ENCODE measurements at regions of chr17 and their contacts with region 1.

Region 1: DNA sequence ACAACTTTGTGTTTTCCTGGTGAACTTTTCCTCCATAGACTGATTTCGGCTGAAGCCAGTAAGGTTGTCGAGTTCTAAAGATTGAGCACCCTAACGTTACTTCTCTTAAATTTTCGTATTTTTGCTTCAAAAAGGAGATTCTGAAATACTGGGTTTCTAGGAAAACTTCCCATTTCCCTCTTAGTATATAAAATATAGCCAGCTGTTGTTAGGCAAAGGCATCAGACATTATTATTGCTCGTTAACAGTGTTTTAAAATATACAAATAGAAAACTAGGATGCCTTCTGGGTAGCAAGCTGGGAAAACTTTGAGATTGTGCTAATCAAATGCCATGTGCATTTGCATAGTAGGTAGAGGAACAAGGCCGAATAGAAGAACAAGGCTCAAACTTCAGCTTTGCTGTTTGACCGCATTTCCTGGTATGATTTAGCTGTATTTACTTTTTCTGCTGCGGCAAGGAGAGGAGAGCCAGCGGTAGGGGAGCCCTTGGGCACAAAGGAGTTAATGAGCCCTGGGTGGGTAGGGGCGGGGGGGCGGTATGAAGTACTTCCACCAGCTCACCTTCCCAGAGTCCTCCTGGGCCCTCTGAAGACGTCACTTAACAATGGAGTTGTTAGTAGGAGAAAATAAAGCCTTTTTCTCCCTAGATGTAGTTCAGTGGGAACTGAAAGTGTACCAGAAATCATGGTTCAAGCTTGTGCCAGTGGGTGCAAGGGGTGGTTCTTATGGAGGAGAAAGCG is 151.9 kb downstream of the MSI2 start:
- DNase-seq: peak; percentile 35
- ATAC-seq: peak; percentile 54
- H3K4me3 ChIP-seq: peak overlapping the region in 3 of 5 experiments; percentile 4 to 21 (median 15)
- H3K4me3 Mint-ChIP-seq: peak overlapping the region; percentile 40
- H3K27ac ChIP-seq: peak overlapping the region; percentile 29 to 40
- H3K27ac Mint-ChIP-seq: peak overlapping the region; percentile 23
- H3K4me1 ChIP-seq: peaks cover 16 to 22% of the 10 kb centered on the region in 2 donors
- H3K4me1 Mint-ChIP-seq: peaks cover 32% of the 10 kb centered on the region
- H3K27me3 ChIP-seq: no peaks in the 10 kb centered on the region
- H3K27me3 Mint-ChIP-seq: no peaks in the 10 kb centered on the region
- CTCF ChIP-seq: no peak

Region 2: GRCh38 chr17:57166717-57167198 is 241.5 kb before region 1 on chr17:
- CTCF ChIA-PET with region 1: no interaction called
- POLR2A ChIA-PET with region 1: no interaction called
- intact Hi-C with region 1: no loop called
- DNase-seq: no peak
- ATAC-seq: no peak
- H3K4me3 ChIP-seq: no peak overlapping the region
- H3K4me3 Mint-ChIP-seq: no peak overlapping the region
- H3K27ac ChIP-seq: no peak overlapping the region
- H3K27ac Mint-ChIP-seq: no peak overlapping the region
- H3K4me1 ChIP-seq: no peaks in the 10 kb centered on the region
- H3K4me1 Mint-ChIP-seq: no peaks in the 10 kb centered on the region
- H3K27me3 ChIP-seq: peaks cover 0 to 6% (median 0%) of the 10 kb centered on the region in 4 experiments
- H3K27me3 Mint-ChIP-seq: peaks cover 40% of the 10 kb centered on the region
- CTCF ChIP-seq: no peak

Region 3: DNA sequence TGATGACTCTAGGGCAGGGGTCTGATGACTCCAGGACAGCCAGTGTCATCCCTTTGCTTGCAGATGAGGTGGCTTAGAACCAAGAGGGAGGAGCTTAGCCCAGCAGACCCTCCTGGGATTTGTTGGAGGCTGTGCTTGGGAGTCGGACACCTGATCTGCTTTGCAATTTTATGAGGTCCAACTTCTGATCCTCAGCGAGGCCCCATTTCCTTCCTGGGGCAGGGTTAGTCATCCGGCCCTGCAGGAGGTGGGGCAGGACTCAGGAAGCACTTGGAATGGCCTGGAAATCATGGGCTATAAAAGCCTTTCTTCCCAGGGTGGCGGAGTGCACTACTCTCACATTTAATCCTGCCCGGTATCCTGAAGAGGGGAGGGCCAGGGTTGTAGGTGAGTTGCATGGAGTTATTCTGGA is 16.5 kb after region 1 on chr17:
- CTCF ChIA-PET with region 1: no interaction called
- POLR2A ChIA-PET with region 1: no interaction called
- intact Hi-C with region 1: loop called (anchors 2 kb)
- DNase-seq: no peak
- ATAC-seq: no peak
- H3K4me3 ChIP-seq: no peak overlapping the region
- H3K4me3 Mint-ChIP-seq: no peak overlapping the region
- H3K27ac ChIP-seq: no peak overlapping the region
- H3K27ac Mint-ChIP-seq: no peak overlapping the region
- H3K4me1 ChIP-seq: peaks cover 10 to 12% of the 10 kb centered on the region in 2 donors
- H3K4me1 Mint-ChIP-seq: peaks cover 36% of the 10 kb centered on the region
- H3K27me3 ChIP-seq: no peaks in the 10 kb centered on the region
- H3K27me3 Mint-ChIP-seq: no peaks in the 10 kb centered on the region
- CTCF ChIP-seq: no peak

Measured in B cell (primary cell).